CD8-positive, alpha-beta T cell (primary cell): ENCODE measurements at regions of chr1 and their contacts with region 1.

Region 1: DNA sequence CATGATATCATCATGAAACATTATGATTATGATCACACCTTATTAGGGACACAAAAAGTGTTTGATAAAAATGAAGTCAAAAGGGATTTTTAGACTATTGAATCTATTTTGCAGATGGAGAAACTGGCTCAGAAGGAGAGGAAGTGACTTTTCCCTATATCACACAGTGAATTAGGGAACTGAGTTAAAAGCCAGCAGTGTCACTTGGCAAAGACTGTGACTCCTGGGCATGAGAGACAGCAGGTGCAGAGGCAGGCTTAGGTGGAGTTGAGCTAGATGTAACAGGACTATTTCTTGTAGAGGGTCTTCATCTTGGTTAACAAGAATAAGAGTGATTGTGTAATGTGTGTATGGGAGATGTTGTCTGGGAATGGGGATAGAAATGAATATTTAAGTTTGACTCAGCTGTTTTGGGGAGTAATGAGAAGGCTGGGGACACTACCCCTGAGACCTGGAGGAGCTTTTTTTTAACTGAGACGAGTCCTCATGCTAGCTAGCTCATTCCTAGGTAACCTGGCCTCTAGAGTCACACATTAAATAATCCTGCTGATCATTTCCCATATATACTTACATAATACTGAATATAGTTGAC is 1.0 kb upstream of the CD84 start:
- DNase-seq: peak in 1 of 9 experiments; percentile 27
- ATAC-seq: no peak
- H3K4me3 ChIP-seq: peak overlapping the region in 1 of 2 experiments; percentile 8
- H3K4me3 Mint-ChIP-seq: peak overlapping the region; percentile 44
- H3K27ac ChIP-seq: peak overlapping the region; percentile 24 to 70
- H3K27ac Mint-ChIP-seq: peak overlapping the region; percentile 84
- H3K4me1 ChIP-seq: peaks cover 58% of the 10 kb centered on the region
- H3K4me1 Mint-ChIP-seq: peaks cover 77% of the 10 kb centered on the region
- H3K27me3 ChIP-seq: no peaks in the 10 kb centered on the region
- H3K27me3 Mint-ChIP-seq: no peaks in the 10 kb centered on the region
- CTCF ChIP-seq: no peak

Region 2: DNA sequence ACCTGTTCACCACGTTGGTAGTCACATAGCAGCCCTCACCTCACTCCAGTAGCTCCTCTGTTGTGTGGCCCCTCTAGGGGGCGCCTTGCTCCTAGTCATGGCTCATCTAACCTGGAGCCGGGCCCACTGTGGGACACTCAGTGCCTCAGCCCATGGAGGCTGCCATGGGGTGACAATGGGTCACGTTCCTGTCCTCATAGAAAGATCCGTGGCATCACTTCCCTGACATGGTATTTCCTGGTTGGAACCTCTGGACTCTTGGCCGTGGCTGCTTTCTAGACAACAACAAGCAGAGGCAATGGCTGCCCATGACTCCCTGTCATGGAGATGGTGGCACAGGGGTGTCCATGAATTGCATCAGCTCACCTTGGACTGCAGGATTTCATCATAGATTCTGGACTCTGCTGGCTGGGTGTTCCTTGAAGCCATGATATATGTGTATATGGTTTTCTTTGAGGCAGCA is 29.7 kb before region 1 on chr1:
- CTCF ChIA-PET with region 1: interaction called, 16 read pairs
- POLR2A ChIA-PET with region 1: interaction called, 6 read pairs
- intact Hi-C with region 1: loop called in 1 of 2 experiments (anchors 5 kb)
- DNase-seq: peak; percentile 25 to 80 (median 67)
- ATAC-seq: peak; percentile 78
- H3K4me3 ChIP-seq: no peak overlapping the region
- H3K4me3 Mint-ChIP-seq: no peak overlapping the region
- H3K27ac ChIP-seq: peak overlapping the region in 1 of 2 experiments; percentile 13
- H3K27ac Mint-ChIP-seq: peak overlapping the region; percentile 13
- H3K4me1 ChIP-seq: no peaks in the 10 kb centered on the region
- H3K4me1 Mint-ChIP-seq: peaks cover 32% of the 10 kb centered on the region
- H3K27me3 ChIP-seq: no peaks in the 10 kb centered on the region
- H3K27me3 Mint-ChIP-seq: no peaks in the 10 kb centered on the region
- CTCF ChIP-seq: peak; percentile 51

Region 3: GRCh38 chr1:160567858-160568682 is 12.2 kb before region 1 on chr1:
- CTCF ChIA-PET with region 1: interaction called, 8 read pairs
- POLR2A ChIA-PET with region 1: interaction called, 44 read pairs
- intact Hi-C with region 1: loop called (anchors 1 kb)
- DNase-seq: peak; percentile 35 to 87 (median 77)
- ATAC-seq: peak; percentile 95
- H3K4me3 ChIP-seq: peak overlapping the region in 1 of 2 experiments; percentile 9
- H3K4me3 Mint-ChIP-seq: peak overlapping the region; percentile 59
- H3K27ac ChIP-seq: peak overlapping the region; percentile 55 to 80
- H3K27ac Mint-ChIP-seq: peak overlapping the region; percentile 95
- H3K4me1 ChIP-seq: peaks cover 93% of the 10 kb centered on the region
- H3K4me1 Mint-ChIP-seq: peaks cover 95% of the 10 kb centered on the region
- H3K27me3 ChIP-seq: no peaks in the 10 kb centered on the region
- H3K27me3 Mint-ChIP-seq: no peaks in the 10 kb centered on the region
- CTCF ChIP-seq: no peak

Region 4: GRCh38 chr1:160597705-160598104 is 17.4 kb after region 1 on chr1:
- CTCF ChIA-PET with region 1: interaction called, 6 read pairs
- POLR2A ChIA-PET with region 1: no interaction called
- intact Hi-C with region 1: loop called in 1 of 2 experiments (anchors 2 kb)
- DNase-seq: no peak
- ATAC-seq: no peak
- H3K4me3 ChIP-seq: no peak overlapping the region
- H3K4me3 Mint-ChIP-seq: no peak overlapping the region
- H3K27ac ChIP-seq: no peak overlapping the region
- H3K27ac Mint-ChIP-seq: no peak overlapping the region
- H3K4me1 ChIP-seq: no peaks in the 10 kb centered on the region
- H3K4me1 Mint-ChIP-seq: no peaks in the 10 kb centered on the region
- H3K27me3 ChIP-seq: no peaks in the 10 kb centered on the region
- H3K27me3 Mint-ChIP-seq: no peaks in the 10 kb centered on the region
- CTCF ChIP-seq: no peak